ENCODE measurements at regions of chr9 and their contacts with region 1.

Region 1: DNA sequence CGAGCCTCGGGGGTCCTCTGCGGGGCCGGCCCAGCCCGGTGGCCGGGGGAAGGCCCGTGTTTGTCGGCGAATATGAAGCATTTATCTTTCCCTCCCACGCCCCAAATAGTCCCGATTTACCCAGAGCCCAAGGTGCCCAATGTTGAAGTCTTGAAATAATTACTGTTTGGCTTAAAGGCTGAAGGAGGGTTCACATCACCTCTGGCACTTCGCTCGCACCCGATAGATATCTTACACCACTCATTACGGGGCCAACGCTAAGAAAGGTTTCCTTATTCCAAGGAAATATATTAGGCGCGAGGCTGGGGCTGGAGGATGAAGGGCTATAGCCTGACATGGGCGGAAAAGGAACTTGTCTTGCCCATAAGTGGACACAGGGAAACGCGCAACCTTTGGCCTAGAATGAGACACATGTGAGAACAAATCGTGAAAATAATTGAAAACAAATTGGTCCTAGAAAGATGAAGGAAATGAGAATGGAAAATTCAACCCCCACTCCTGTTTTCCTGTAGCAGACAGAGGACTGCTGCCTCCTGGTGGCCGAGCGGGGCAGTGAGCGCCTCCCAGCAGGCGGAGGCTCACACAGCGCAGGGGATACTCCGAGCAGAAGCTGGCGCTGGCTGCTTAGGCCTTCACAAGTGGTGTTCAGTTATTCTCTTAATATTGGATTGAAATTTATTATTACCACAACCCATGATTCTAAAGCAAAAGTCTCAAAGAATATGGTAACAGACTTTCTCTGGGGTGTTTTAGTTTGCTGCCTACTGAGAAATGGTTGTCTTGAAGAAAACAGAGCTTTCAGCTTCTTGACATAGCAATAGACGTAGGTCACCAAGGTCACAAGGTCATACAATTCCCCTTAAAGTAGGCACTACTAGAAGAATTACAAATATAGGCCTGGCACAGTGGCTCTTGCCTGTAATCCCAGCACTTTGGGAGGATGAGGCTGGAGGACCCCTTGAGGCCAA is 7.9 kb downstream of the CCL21 start:
- H3K4me3 Mint-ChIP-seq: peak overlapping the region; percentile 56
- H3K27ac Mint-ChIP-seq: no peak overlapping the region
- H3K4me1 Mint-ChIP-seq: peaks cover 6% of the 10 kb centered on the region
- H3K27me3 Mint-ChIP-seq: peaks cover 21% of the 10 kb centered on the region

Region 2: GRCh38 chr9:34675048-34675714 is 26.9 kb before region 1 on chr9:
- intact Hi-C with region 1: loop called (anchors 1 kb)
- H3K4me3 Mint-ChIP-seq: no peak overlapping the region
- H3K27ac Mint-ChIP-seq: no peak overlapping the region
- H3K4me1 Mint-ChIP-seq: no peaks in the 10 kb centered on the region
- H3K27me3 Mint-ChIP-seq: no peaks in the 10 kb centered on the region

Measured in dendritic cell treated with granulocyte-macrophage colony-stimulating factor and Interleukin-4, amounts not matched to agents 40 ng/mL and 50 ng/mL, for 4 days (primary cell).